Cardiac septum (tissue), 1 donor: ENCODE measurements at regions of chr13 and their contacts with region 1.

Region 1: GRCh38 chr13:113393563-113394338 is 29.8 kb upstream of the GRTP1 start:
- DNase-seq: peak; percentile 91

Region 2: GRCh38 chr13:112942689-112943308 is 451.0 kb before region 1 on chr13:
- intact Hi-C with region 1: loop called (anchors 5 kb)
- DNase-seq: peak; percentile 97

Region 3: GRCh38 chr13:113029487-113030258 is 364.1 kb before region 1 on chr13:
- intact Hi-C with region 1: loop called (anchors 5 kb)
- DNase-seq: no peak

Region 4: GRCh38 chr13:113275387-113275786 is 118.4 kb before region 1 on chr13:
- intact Hi-C with region 1: loop called (anchors 5 kb)
- DNase-seq: no peak

Region 5: DNA sequence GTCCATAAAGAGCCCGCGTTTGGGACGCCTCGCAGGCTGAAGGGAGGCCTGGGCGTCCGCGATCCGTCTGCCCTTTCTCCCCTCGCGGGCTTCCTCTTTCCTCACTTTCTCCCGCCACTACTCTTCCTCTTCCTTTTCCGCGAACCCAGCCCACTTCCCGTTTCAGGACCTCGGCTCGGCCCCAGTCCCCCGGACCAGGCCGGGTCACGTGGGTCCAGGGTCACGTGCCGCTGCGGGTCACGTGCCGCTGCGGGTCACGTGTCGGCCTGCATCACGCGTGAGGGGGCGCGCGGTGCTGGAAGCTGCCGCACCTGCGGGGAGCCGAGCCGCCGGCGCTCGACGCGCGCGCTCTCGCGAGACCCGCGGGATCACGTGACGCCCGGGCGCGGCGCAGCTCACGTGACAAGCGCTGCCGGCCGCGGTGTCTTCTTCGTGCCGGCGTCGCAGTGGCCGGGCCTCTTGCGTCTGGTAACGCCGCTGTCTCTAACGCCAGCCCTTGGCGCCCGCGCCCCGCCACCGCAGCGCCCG is 96.8 kb before region 1 on chr13 and contains the start of gene LAMP1:
- intact Hi-C with region 1: loop called (anchors 2 kb)
- DNase-seq: peak; percentile 97
- total RNA-seq, gene LAMP1: 91.4 TPM